ENCODE measurements at regions of chr4 and their contacts with region 1.

Region 1: DNA sequence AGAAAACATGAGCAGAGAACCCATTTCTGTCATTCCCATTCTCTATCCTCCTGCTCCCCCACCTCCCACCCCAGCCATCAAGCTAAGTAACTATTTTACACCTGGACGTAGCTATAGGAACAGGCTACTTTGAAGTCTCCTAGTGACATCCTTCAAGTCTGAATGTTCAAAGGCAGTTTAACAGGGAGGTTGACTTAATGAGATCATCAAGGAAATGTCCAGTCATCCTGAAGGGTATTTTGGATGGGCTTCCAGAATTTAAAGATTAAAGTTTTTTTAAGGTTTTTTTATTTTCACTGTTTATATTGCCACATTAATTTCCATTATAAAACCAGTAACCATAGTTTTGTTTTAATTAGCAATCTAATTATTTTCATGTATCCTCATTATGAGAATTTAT is 41.1 kb downstream of the HPF1 start:
- DNase-seq: no peak

Region 2: GRCh38 chr4:169659716-169660670 is 56.7 kb before region 1 on chr4:
- intact Hi-C with region 1: loop called (anchors 5 kb)
- DNase-seq: peak; percentile 79